Dorsolateral prefrontal cortex (tissue), 120 donors: ENCODE measurements at regions of chr2 and their contacts with region 1.

Region 1: DNA sequence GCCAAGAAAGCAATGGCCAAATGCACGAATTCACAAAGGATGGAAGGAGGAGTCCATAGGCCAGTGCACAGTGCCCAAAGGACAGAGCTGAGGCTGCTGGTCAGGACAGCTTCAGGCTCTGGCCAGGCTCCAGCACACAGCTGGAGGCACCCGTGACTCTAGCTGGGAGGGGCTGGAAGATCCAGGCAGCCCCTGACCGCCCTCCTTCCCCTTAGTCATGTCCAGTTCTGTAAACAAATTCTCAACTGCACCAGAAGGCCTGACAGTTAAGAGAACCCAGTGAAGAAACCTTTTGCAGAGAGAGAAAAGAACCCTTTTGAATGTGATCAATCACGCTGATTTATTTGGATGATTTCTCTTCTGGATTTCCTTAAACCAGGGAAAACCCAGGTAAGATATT is 7.7 kb upstream of the YWHAQ start:
- DNase-seq: peak in 9 of 10 donors; percentile 83 to 93 (median 91)
- H3K4me3 ChIP-seq: peak overlapping the region in 50 of 59 donors; percentile 1 to 60 (median 28)
- H3K27ac ChIP-seq: peak overlapping the region; percentile 50 to 99 (median 95)
- H3K27me3 ChIP-seq: no peaks in the 10 kb centered on the region
- CTCF ChIP-seq: peak in 8 of 56 donors; percentile 6 to 22 (median 18)

Region 2: GRCh38 chr2:9652898-9653479 is 14.5 kb after region 1 on chr2:
- intact Hi-C with region 1: loop called in 1 of 2 experiments (anchors 1 kb)
- DNase-seq: no peak
- H3K4me3 ChIP-seq: peak overlapping the region in 9 of 59 donors; percentile 0 to 28 (median 9)
- H3K27ac ChIP-seq: peak overlapping the region; percentile 0 to 92 (median 80)
- H3K27me3 ChIP-seq: no peaks in the 10 kb centered on the region
- CTCF ChIP-seq: no peak